Testis (tissue), 5 donors: ENCODE measurements at regions of chr1 and their contacts with region 1.

Region 1: GRCh38 chr1:39609618-39610331 is 29.7 kb downstream of the HEYL start:
- DNase-seq: peak; percentile 87
- H3K4me3 ChIP-seq: peak overlapping the region; percentile 25 to 32
- H3K27ac ChIP-seq: peak overlapping the region in 1 of 2 donors; percentile 11
- H3K4me1 ChIP-seq: peaks cover 5% of the 10 kb centered on the region
- H3K27me3 ChIP-seq: no peaks in the 10 kb centered on the region
- CTCF ChIP-seq: peak in 2 of 3 experiments; percentile 53 to 76
- POLR2A ChIP-seq: no peak

Region 2: GRCh38 chr1:39434797-39435395 is 174.9 kb before region 1 on chr1:
- intact Hi-C with region 1: no loop called
- DNase-seq: no peak
- H3K4me3 ChIP-seq: no peak overlapping the region
- H3K27ac ChIP-seq: no peak overlapping the region
- H3K4me1 ChIP-seq: no peaks in the 10 kb centered on the region
- H3K27me3 ChIP-seq: no peaks in the 10 kb centered on the region
- CTCF ChIP-seq: no peak
- POLR2A ChIP-seq: no peak

Region 3: GRCh38 chr1:39653546-39654031 is 43.8 kb after region 1 on chr1:
- intact Hi-C with region 1: loop called (anchors 2 kb)
- DNase-seq: peak; percentile 93
- H3K4me3 ChIP-seq: no peak overlapping the region
- H3K27ac ChIP-seq: peak overlapping the region in 1 of 2 donors; percentile 26
- H3K4me1 ChIP-seq: peaks cover 33% of the 10 kb centered on the region
- H3K27me3 ChIP-seq: no peaks in the 10 kb centered on the region
- CTCF ChIP-seq: peak; percentile 86 to 96 (median 86)
- POLR2A ChIP-seq: no peak

Region 4: DNA sequence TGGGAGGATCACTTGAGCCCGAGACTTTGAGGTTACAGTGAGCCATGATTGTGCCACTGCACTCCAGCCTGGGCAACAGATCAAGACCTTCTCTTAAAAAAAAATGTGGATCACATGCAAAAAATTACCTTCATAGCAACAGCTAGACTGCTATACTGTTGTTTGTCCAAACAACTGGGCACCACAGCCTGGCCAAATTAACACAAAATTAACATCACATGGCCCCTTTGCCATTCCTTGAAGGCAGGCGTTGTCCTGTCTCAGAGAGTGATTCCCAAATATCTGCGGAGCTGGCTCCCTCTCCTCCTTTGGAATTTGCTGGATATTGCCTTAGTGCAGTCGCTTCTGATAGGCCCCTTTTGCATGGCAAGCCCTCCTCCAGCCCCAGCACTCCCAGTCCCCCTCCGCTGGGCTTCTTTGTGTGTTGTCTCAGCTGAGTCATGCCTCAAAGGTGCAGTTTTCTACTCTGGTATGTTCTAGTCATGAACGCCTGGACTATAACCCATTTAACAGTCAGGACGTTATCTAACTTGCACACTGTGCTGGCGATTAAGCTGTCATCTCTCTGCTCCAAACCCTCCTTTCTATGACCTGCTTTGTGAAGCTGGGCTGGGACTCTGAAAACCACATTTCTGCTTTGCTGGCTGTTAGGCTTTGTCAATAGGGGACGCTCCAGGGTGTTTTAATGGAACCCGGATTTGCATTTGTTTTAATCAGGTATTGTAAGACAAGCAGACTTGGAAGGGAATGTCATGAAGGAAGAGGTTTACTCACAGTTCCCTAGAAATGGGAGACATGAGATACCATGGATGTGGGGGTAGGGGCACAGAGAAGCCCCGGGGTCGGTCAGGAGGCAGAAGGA is 101.6 kb after region 1 on chr1:
- intact Hi-C with region 1: loop called (anchors 10 kb)
- DNase-seq: no peak
- H3K4me3 ChIP-seq: no peak overlapping the region
- H3K27ac ChIP-seq: no peak overlapping the region
- H3K4me1 ChIP-seq: no peaks in the 10 kb centered on the region
- H3K27me3 ChIP-seq: no peaks in the 10 kb centered on the region
- CTCF ChIP-seq: no peak
- POLR2A ChIP-seq: no peak